Mammary epithelial cell (primary cell): ENCODE measurements at regions of chr3 and their contacts with region 1.

Region 1: GRCh38 chr3:159260049-159260662 is 458.3 kb downstream of the MFSD1 start:
- DNase-seq: peak; percentile 42
- H3K4me3 ChIP-seq: no peak overlapping the region
- H3K27ac ChIP-seq: no peak overlapping the region
- H3K4me1 ChIP-seq: no peaks in the 10 kb centered on the region
- H3K27me3 ChIP-seq: peaks cover 2% of the 10 kb centered on the region
- CTCF ChIP-seq: peak; percentile 65 to 70

Region 2: GRCh38 chr3:158352551-158352950 is 907.6 kb before region 1 on chr3:
- CTCF ChIA-PET with region 1: no interaction called
- dilution Hi-C with region 1: no loop called
- in situ Hi-C with region 1: no loop called
- intact Hi-C with region 1: no loop called
- DNase-seq: no peak
- H3K4me3 ChIP-seq: no peak overlapping the region
- H3K27ac ChIP-seq: no peak overlapping the region
- H3K4me1 ChIP-seq: no peaks in the 10 kb centered on the region
- H3K27me3 ChIP-seq: no peaks in the 10 kb centered on the region
- CTCF ChIP-seq: no peak

Region 3: DNA sequence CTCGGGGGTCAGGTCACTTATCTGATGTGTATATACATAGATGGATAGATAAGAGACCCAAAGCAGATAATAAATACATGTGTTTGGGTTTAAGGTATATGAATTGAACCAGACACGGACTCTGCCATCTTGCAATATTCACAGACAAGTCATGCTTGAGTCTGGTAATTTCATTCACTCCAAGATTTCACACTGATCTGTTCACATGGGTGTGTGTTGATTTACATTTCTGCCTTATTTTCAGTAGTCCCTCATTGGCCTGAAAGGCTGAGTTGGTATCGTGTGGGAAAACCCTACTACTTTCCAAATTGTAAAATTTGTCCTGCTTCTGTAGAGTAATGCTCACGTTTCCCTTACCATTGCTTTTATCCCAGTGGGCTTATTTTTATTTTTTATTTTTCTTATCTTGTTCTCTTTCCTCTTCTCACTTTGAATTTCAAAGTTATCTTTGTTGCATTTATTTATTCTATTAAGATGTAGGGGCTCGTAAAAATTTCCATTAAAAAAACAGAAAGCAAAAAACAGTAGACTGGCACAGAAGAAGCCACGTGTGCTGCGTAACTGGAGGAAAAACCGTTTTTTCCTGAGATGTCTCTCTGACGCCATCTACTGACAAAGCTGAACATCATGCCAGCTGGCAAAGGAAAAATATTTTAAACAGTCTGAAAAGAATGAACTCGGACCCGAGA is 469.1 kb before region 1 on chr3:
- CTCF ChIA-PET with region 1: no interaction called
- dilution Hi-C with region 1: no loop called
- in situ Hi-C with region 1: no loop called
- intact Hi-C with region 1: loop called (anchors 1 kb)
- DNase-seq: peak; percentile 46
- H3K4me3 ChIP-seq: peak overlapping the region in 2 of 3 experiments; percentile 2 to 16
- H3K27ac ChIP-seq: no peak overlapping the region
- H3K4me1 ChIP-seq: peaks cover 10% of the 10 kb centered on the region
- H3K27me3 ChIP-seq: no peaks in the 10 kb centered on the region
- CTCF ChIP-seq: peak; percentile 88

Region 4: GRCh38 chr3:158912188-158912587 is 348.0 kb before region 1 on chr3:
- CTCF ChIA-PET with region 1: no interaction called
- dilution Hi-C with region 1: loop called (anchors 25 kb)
- in situ Hi-C with region 1: loop called in 1 of 2 experiments (anchors 5 kb)
- intact Hi-C with region 1: no loop called
- DNase-seq: no peak
- H3K4me3 ChIP-seq: no peak overlapping the region
- H3K27ac ChIP-seq: no peak overlapping the region
- H3K4me1 ChIP-seq: no peaks in the 10 kb centered on the region
- H3K27me3 ChIP-seq: no peaks in the 10 kb centered on the region
- CTCF ChIP-seq: no peak

Region 5: GRCh38 chr3:159234306-159234705 is 25.9 kb before region 1 on chr3:
- CTCF ChIA-PET with region 1: no interaction called
- dilution Hi-C with region 1: no loop called
- in situ Hi-C with region 1: no loop called
- intact Hi-C with region 1: no loop called
- DNase-seq: no peak
- H3K4me3 ChIP-seq: no peak overlapping the region
- H3K27ac ChIP-seq: no peak overlapping the region
- H3K4me1 ChIP-seq: no peaks in the 10 kb centered on the region
- H3K27me3 ChIP-seq: no peaks in the 10 kb centered on the region
- CTCF ChIP-seq: no peak

Region 6: GRCh38 chr3:159586571-159587202 is 326.5 kb after region 1 on chr3:
- CTCF ChIA-PET with region 1: no interaction called
- dilution Hi-C with region 1: no loop called
- in situ Hi-C with region 1: loop called in 1 of 2 experiments (anchors 25 kb)
- intact Hi-C with region 1: loop called (anchors 1 kb)
- DNase-seq: peak; percentile 11
- H3K4me3 ChIP-seq: no peak overlapping the region
- H3K27ac ChIP-seq: no peak overlapping the region
- H3K4me1 ChIP-seq: no peaks in the 10 kb centered on the region
- H3K27me3 ChIP-seq: no peaks in the 10 kb centered on the region
- CTCF ChIP-seq: peak; percentile 23 to 50

Region 7: GRCh38 chr3:159804726-159805410 is 544.7 kb after region 1 on chr3:
- CTCF ChIA-PET with region 1: no interaction called
- dilution Hi-C with region 1: no loop called
- in situ Hi-C with region 1: loop called (anchors 10 to 25 kb)
- intact Hi-C with region 1: loop called (anchors 1 kb)
- DNase-seq: peak; percentile 79
- H3K4me3 ChIP-seq: no peak overlapping the region
- H3K27ac ChIP-seq: no peak overlapping the region
- H3K4me1 ChIP-seq: peaks cover 27% of the 10 kb centered on the region
- H3K27me3 ChIP-seq: no peaks in the 10 kb centered on the region
- CTCF ChIP-seq: peak; percentile 96 to 98

Region 8: DNA sequence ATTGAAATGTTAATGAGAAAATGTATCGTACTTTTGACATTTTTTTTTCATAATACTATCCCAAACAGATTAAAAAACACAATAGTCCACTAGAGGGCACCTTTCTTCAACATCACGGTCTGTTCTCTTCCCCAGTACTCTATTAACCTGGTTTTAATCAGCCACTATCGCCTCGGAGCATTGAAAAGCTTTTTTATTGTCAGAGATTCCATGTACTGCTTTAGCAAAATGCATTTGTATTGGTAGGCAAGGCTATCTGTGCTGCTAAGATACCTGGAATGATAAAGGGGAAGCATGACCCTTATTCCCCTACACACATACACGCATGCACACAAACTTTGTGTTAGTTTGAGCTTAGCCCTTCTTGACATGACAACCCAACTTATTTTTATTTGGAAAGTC is 568.4 kb after region 1 on chr3:
- CTCF ChIA-PET with region 1: no interaction called
- dilution Hi-C with region 1: no loop called
- in situ Hi-C with region 1: loop called in 1 of 2 experiments (anchors 25 kb)
- intact Hi-C with region 1: loop called (anchors 5 kb)
- DNase-seq: peak; percentile 47
- H3K4me3 ChIP-seq: no peak overlapping the region
- H3K27ac ChIP-seq: peak overlapping the region; percentile 27
- H3K4me1 ChIP-seq: peaks cover 55% of the 10 kb centered on the region
- H3K27me3 ChIP-seq: no peaks in the 10 kb centered on the region
- CTCF ChIP-seq: peak; percentile 46 to 51

Region 9: GRCh38 chr3:160210799-160211221 is 950.7 kb after region 1 on chr3:
- CTCF ChIA-PET with region 1: no interaction called
- dilution Hi-C with region 1: no loop called
- in situ Hi-C with region 1: no loop called
- intact Hi-C with region 1: loop called (anchors 10 kb)
- DNase-seq: peak; percentile 40
- H3K4me3 ChIP-seq: no peak overlapping the region
- H3K27ac ChIP-seq: no peak overlapping the region
- H3K4me1 ChIP-seq: no peaks in the 10 kb centered on the region
- H3K27me3 ChIP-seq: peaks cover 3% of the 10 kb centered on the region
- CTCF ChIP-seq: peak; percentile 28 to 49